ENCODE measurements at regions of chr1 and their contacts with region 1.

Region 1: GRCh38 chr1:231337472-231338269 is at the start of gene EXOC8:
- DNase-seq: peak; percentile 96 to 100 (median 99)
- H3K4me3 ChIP-seq: peak within 1 kb of the TSS; percentile 90 to 97
- H3K4me3 Mint-ChIP-seq: peak within 1 kb of the TSS; percentile 97 to 100 (median 99)
- H3K27ac ChIP-seq: peak within 1 kb of the TSS; percentile 98
- H3K27ac Mint-ChIP-seq: peak within 1 kb of the TSS; percentile 99 to 100 (median 100)
- H3K4me1 ChIP-seq: peaks cover 61% of the 10 kb centered on the region
- H3K4me1 Mint-ChIP-seq: peaks cover 42 to 75% (median 60%) of the 10 kb centered on the region in 4 donors
- H3K27me3 ChIP-seq: no peaks in the 10 kb centered on the region
- H3K27me3 Mint-ChIP-seq: no peaks in the 10 kb centered on the region
- total RNA-seq, gene EXOC8: 37.4 to 37.7 TPM

Region 2: GRCh38 chr1:231040019-231040799 is 297.5 kb before region 1 on chr1 and contains the start of gene FAM89A:
- CTCF ChIA-PET with region 1: no interaction called
- POLR2A ChIA-PET with region 1: no interaction called
- intact Hi-C with region 1: loop called (anchors 5 kb)
- DNase-seq: peak; percentile 61 to 75 (median 69)
- H3K4me3 ChIP-seq: peak within 1 kb of the TSS; percentile 45 to 64
- H3K4me3 Mint-ChIP-seq: peak within 1 kb of the TSS; percentile 79 to 87 (median 84)
- H3K27ac ChIP-seq: peak within 1 kb of the TSS; percentile 46
- H3K27ac Mint-ChIP-seq: peak within 1 kb of the TSS; percentile 15 to 93 (median 72)
- H3K4me1 ChIP-seq: peaks cover 13% of the 10 kb centered on the region
- H3K4me1 Mint-ChIP-seq: peaks cover 18 to 41% (median 29%) of the 10 kb centered on the region in 4 donors
- H3K27me3 ChIP-seq: no peaks in the 10 kb centered on the region
- H3K27me3 Mint-ChIP-seq: no peaks in the 10 kb centered on the region
- total RNA-seq, gene FAM89A: 6.5 to 8.7 TPM

Region 3: GRCh38 chr1:231315887-231316286 is 21.8 kb before region 1 on chr1:
- CTCF ChIA-PET with region 1: interaction called, 12 read pairs
- POLR2A ChIA-PET with region 1: interaction called, 5 read pairs
- intact Hi-C with region 1: no loop called
- DNase-seq: peak in 4 of 5 donors; percentile 15 to 38 (median 18)
- H3K4me3 ChIP-seq: no peak overlapping the region
- H3K4me3 Mint-ChIP-seq: peak overlapping the region in 1 of 8 donors; percentile 26
- H3K27ac ChIP-seq: no peak overlapping the region
- H3K27ac Mint-ChIP-seq: peak overlapping the region in 1 of 7 donors; percentile 19
- H3K4me1 ChIP-seq: no peaks in the 10 kb centered on the region
- H3K4me1 Mint-ChIP-seq: no peaks in the 10 kb centered on the region
- H3K27me3 ChIP-seq: no peaks in the 10 kb centered on the region
- H3K27me3 Mint-ChIP-seq: peaks cover 0 to 1% of the 10 kb centered on the region in 2 donors

Region 4: DNA sequence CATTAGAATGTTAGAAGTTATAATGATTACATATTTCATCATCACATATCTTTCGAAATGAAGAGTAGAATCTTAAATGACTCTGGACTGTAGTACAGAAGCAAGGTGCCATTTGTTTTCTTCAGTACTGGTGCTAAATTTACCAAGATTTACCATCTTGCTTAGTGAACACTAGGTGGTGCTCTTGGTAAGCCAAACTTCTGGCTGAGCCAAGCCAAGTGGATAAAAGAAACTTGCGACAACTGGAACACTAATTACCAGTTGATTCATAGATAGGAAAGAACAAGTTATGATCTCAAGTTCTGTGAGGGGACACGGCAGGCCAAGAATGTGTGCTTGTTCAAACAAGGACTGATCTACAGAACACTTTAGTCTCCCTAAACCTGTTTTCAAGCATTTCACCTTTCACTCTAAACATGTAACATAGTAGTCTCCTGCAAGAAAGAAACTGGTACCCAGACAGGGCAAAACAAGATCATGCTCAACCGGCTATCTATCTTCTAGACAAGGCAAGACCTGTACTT is 20.2 kb after region 1 on chr1:
- CTCF ChIA-PET with region 1: interaction called, 16 read pairs
- POLR2A ChIA-PET with region 1: interaction called, 11 read pairs
- intact Hi-C with region 1: loop called (anchors 2 kb)
- DNase-seq: peak; percentile 53 to 62 (median 58)
- H3K4me3 ChIP-seq: no peak overlapping the region
- H3K4me3 Mint-ChIP-seq: no peak overlapping the region
- H3K27ac ChIP-seq: no peak overlapping the region
- H3K27ac Mint-ChIP-seq: peak overlapping the region in 5 of 7 donors; percentile 20 to 65 (median 29)
- H3K4me1 ChIP-seq: peaks cover 5% of the 10 kb centered on the region
- H3K4me1 Mint-ChIP-seq: peaks cover 5 to 9% (median 9%) of the 10 kb centered on the region in 4 donors
- H3K27me3 ChIP-seq: no peaks in the 10 kb centered on the region
- H3K27me3 Mint-ChIP-seq: no peaks in the 10 kb centered on the region

Region 5: GRCh38 chr1:231528172-231529029 is 190.7 kb after region 1 on chr1 and contains the start of gene TSNAX:
- CTCF ChIA-PET with region 1: interaction called, 3 read pairs
- POLR2A ChIA-PET with region 1: interaction called, 20 read pairs
- intact Hi-C with region 1: loop called (anchors 1 kb)
- DNase-seq: peak; percentile 87 to 94 (median 93)
- H3K4me3 ChIP-seq: peak within 1 kb of the TSS; percentile 59 to 86
- H3K4me3 Mint-ChIP-seq: peak within 1 kb of the TSS; percentile 96 to 98 (median 98)
- H3K27ac ChIP-seq: peak within 1 kb of the TSS; percentile 82
- H3K27ac Mint-ChIP-seq: peak within 1 kb of the TSS; percentile 99 to 100 (median 100)
- H3K4me1 ChIP-seq: peaks cover 52% of the 10 kb centered on the region
- H3K4me1 Mint-ChIP-seq: peaks cover 19 to 52% (median 36%) of the 10 kb centered on the region in 4 donors
- H3K27me3 ChIP-seq: no peaks in the 10 kb centered on the region
- H3K27me3 Mint-ChIP-seq: no peaks in the 10 kb centered on the region
- total RNA-seq, gene TSNAX: 43.5 to 50.7 TPM

Region 6: DNA sequence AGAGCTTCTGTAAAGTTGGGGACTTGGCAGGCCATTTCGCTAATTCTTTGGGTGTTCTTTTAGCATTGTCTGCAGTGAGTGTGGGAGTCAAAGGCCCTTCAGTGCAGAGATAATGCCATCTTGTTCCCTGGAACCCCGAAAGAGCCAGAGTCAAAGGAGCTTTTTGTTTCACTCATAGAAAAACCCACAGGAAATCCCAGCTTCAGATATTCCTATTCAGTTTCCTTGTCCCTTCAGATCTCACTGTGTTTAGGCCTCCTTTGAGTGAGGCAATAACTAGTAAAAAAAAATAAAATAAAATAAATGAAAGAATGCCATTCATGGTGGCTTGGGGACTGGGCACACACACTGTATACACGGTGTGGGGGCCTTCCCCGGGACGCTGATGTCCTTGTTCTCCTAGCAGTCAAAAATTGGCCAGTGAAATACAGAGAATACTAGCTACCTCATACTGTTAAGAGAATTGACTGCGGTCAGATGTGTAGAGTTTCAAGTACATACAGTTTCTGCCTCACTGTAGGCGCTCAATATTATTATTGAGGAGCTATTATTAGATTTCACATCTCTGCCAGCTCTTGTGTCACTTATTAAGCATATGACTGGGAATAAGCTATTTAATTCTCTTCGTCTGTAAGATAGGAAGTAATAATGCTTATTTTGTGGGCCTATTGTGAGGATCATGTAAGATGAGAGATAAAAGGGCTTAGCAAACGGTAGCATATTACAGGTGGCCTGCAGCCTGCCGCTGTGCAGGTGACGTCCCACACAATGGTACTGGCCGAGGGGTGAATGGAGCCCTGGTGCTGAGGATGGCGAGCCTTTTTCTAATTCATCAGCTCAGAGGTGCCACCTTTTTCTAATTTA is 305.6 kb after region 1 on chr1:
- CTCF ChIA-PET with region 1: no interaction called
- POLR2A ChIA-PET with region 1: no interaction called
- intact Hi-C with region 1: no loop called
- DNase-seq: no peak
- H3K4me3 ChIP-seq: no peak overlapping the region
- H3K4me3 Mint-ChIP-seq: no peak overlapping the region
- H3K27ac ChIP-seq: no peak overlapping the region
- H3K27ac Mint-ChIP-seq: peak overlapping the region in 2 of 7 donors; percentile 3 to 32
- H3K4me1 ChIP-seq: no peaks in the 10 kb centered on the region
- H3K4me1 Mint-ChIP-seq: peaks cover 21 to 43% (median 21%) of the 10 kb centered on the region in 4 donors
- H3K27me3 ChIP-seq: no peaks in the 10 kb centered on the region
- H3K27me3 Mint-ChIP-seq: no peaks in the 10 kb centered on the region